ENCODE measurements at regions of chr10 and their contacts with region 1.

Region 1: DNA sequence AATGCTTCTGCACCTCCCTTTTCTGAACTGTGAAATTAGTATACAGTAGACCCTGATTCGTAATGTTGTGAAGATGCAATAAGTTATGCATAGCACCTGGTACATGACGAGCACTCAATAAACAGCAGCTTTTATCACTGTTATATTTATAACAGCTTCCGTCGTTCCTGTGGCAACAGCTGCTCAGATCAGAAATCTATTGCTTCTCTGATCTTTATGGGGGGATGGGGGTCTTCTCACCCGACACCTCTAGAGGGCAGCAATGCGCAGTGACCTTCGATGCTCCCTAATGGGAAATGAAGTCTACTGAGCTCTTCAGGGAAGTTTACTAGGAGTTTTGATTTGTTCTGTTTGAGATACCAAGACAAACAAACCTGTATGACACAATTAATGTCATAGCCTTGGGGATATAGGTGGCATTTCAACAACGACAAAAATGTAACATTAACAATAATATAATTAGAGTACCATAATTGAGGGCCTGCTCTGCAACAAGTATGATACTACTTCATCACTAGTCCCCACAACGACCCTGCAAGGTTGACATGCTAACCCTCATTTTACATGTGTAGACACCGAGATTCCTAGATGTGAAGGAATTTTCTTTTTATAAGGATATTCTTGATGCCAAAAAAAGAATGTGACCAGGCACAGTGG is 289.6 kb downstream of the SFMBT2 start:
- DNase-seq: peak; percentile 83
- ATAC-seq: peak; percentile 91
- H3K4me3 Mint-ChIP-seq: no peak overlapping the region
- H3K27ac Mint-ChIP-seq: no peak overlapping the region
- H3K4me1 Mint-ChIP-seq: peaks cover 5% of the 10 kb centered on the region
- H3K27me3 Mint-ChIP-seq: peaks cover 2% of the 10 kb centered on the region

Region 2: DNA sequence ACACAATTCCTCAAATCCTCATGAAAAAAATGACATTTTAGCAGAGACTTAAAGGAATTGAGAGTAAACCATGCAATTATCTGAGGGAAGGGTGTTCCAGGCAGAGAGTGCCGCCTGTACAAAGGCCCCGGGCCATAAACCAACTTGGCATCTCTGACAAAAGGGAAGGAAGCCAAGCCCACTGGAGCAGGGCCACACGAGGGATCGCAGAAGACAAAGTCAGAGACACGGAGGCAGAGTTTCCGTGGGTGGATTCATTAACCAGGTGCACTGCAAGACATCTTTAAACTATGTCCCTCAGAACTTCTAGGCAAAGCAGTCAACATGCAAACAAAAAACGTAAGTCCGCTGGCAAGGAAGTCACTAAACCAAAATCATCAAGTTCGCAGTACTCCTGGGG is 197.6 kb after region 1 on chr10:
- CTCF ChIA-PET with region 1: no interaction called
- POLR2A ChIA-PET with region 1: no interaction called
- intact Hi-C with region 1: loop called in 1 of 2 experiments (anchors 5 kb)
- DNase-seq: peak; percentile 25
- ATAC-seq: no peak
- H3K4me3 Mint-ChIP-seq: no peak overlapping the region
- H3K27ac Mint-ChIP-seq: peak overlapping the region; percentile 20
- H3K4me1 Mint-ChIP-seq: peaks cover 52% of the 10 kb centered on the region
- H3K27me3 Mint-ChIP-seq: no peaks in the 10 kb centered on the region

Region 3: GRCh38 chr10:7417103-7417623 is 295.9 kb after region 1 on chr10:
- CTCF ChIA-PET with region 1: interaction called, 7 read pairs
- POLR2A ChIA-PET with region 1: no interaction called
- intact Hi-C with region 1: loop called (anchors 1 kb)
- DNase-seq: no peak
- ATAC-seq: peak; percentile 37
- H3K4me3 Mint-ChIP-seq: no peak overlapping the region
- H3K27ac Mint-ChIP-seq: peak overlapping the region; percentile 34
- H3K4me1 Mint-ChIP-seq: peaks cover 26% of the 10 kb centered on the region
- H3K27me3 Mint-ChIP-seq: peaks cover 9% of the 10 kb centered on the region

Region 4: GRCh38 chr10:7687228-7687907 is 566.1 kb after region 1 on chr10:
- CTCF ChIA-PET with region 1: no interaction called
- POLR2A ChIA-PET with region 1: no interaction called
- intact Hi-C with region 1: loop called in 1 of 2 experiments (anchors 1 kb)
- DNase-seq: peak; percentile 89
- ATAC-seq: peak; percentile 92
- H3K4me3 Mint-ChIP-seq: no peak overlapping the region
- H3K27ac Mint-ChIP-seq: no peak overlapping the region
- H3K4me1 Mint-ChIP-seq: peaks cover 7% of the 10 kb centered on the region
- H3K27me3 Mint-ChIP-seq: peaks cover 7% of the 10 kb centered on the region

Measured in activated CD4-positive, alpha-beta T cell treated with anti-CD3 and anti-CD28 coated beads for 36 hours (primary cell).